ENCODE measurements at regions of chr21 and their contacts with region 1.

Region 1: GRCh38 chr21:36419996-36420395 is 34.8 kb downstream of the CHAF1B start:
- DNase-seq: peak; percentile 36
- H3K4me3 ChIP-seq: no peak overlapping the region
- H3K27me3 ChIP-seq: no peaks in the 10 kb centered on the region
- CTCF ChIP-seq: peak; percentile 84

Region 2: DNA sequence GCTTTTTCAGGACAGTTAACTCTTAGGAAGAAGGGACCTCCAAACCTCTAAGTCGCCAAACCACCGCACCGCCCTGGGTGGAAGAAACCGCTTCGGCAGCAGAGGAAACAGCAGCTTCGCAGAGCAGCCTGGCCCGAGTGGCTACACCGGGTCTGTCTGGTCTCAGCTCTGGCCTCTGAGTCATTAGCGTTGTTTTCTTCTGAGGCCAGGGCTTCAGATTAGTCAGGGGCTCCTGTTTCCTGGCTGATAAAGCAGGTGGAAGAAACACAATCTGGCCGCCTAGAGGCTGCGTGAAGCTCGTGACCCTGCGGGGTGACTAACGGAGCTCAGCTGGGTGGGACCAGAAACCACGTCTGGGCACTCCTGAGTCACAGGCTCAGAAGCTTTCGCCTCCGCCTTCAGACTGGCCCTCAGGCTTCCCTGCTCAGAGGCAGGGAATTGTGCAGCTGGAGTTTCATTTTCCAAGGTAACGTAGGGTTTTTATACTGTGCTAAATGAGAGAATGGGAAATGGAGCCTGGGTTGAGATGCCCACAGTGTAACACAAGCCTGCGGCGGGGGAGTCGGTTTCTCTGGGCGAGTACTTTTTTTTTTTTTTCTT is 10.1 kb after region 1 on chr21:
- CTCF ChIA-PET with region 1: interaction called, 20 read pairs
- POLR2A ChIA-PET with region 1: no interaction called
- DNase-seq: peak; percentile 95
- H3K4me3 ChIP-seq: peak overlapping the region; percentile 10; the same call in 1 of the 2 replicates
- H3K27me3 ChIP-seq: no peaks in the 10 kb centered on the region
- CTCF ChIP-seq: 0 out of 2 replicates have a peak, but pooled peaks have one; percentile 18

Region 3: DNA sequence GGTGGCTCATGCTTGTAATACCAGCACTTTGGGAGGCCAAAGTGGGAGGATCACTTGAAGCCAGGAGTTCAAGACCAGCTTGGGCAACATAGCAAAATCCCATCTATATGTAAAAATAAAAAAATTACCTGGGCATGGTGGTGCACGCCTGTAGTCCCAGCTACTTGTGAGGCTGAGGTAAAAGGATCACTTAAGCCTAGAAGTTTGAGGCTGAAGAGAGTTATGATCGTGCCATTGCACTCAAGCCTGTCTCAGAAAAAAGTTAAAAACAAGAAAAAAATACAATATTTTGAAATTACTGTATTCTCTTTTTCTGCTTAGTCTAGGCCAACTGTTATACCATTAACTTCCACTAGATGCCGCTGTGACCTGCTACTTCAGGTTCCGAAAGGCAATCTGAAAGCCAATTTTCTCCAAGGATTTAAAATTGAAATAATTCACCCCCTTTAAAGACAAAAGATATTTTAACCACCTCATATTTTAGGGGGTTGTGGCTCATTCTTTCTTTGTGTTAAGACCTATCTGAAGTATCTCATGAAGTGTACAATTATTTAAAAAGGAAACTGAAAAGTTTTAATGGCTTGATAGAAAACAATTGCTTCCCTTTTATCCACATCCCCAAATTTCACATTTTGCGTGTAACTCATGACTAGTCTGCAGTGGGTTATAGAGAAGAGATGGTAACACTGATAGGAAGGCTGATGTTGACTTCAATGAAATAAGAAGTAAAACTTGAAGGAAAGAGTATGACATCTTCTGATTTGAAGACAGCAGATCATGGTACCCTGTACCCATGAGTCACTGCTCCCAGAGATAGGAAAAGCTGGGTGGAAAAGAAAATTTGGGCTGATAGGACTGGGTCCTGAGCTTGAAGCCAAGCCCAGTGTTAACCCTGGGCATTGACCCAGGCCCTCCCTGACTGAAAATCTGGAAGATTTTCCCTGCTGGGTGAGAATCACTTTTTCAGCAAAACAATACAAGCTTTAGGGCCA is 84.4 kb after region 1 on chr21:
- CTCF ChIA-PET with region 1: interaction called, 12 read pairs
- POLR2A ChIA-PET with region 1: no interaction called
- DNase-seq: no peak
- H3K4me3 ChIP-seq: no peak overlapping the region
- H3K27me3 ChIP-seq: peaks cover 10% of the 10 kb centered on the region
- CTCF ChIP-seq: peak; percentile 78

Region 4: DNA sequence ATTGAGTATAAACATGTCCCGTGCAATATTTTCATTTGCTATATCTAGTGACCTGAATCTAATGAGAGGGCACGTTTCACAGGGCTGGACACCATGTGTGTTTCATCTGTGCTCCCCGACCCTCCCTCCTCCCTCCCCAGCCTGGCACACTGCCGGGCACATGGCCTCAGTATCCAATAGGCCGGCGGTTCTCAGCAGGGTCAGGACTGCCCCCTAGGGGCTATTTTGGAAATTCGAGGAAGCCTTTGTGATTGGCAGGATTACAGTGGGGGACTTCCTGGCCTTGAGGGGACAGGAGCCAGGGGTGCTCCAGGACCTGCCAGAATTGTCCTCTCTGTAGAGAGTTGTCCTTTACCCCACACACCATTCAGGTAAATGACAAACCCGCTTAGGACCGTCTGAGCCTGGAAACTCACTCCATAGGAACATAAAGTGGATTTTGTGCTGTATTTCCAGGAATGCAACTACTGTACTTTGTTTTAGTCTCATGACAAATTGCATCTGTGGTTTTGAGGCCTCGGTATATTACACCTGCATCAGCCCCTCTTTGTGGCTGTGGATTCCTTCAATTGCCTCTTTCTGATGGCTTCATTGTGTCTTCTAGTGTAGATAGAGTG is 169.5 kb after region 1 on chr21:
- CTCF ChIA-PET with region 1: interaction called, 11 read pairs
- POLR2A ChIA-PET with region 1: no interaction called
- DNase-seq: peak; percentile 1
- H3K4me3 ChIP-seq: no peak overlapping the region
- H3K27me3 ChIP-seq: peaks cover 2% of the 10 kb centered on the region
- CTCF ChIP-seq: peak; percentile 75

Region 5: DNA sequence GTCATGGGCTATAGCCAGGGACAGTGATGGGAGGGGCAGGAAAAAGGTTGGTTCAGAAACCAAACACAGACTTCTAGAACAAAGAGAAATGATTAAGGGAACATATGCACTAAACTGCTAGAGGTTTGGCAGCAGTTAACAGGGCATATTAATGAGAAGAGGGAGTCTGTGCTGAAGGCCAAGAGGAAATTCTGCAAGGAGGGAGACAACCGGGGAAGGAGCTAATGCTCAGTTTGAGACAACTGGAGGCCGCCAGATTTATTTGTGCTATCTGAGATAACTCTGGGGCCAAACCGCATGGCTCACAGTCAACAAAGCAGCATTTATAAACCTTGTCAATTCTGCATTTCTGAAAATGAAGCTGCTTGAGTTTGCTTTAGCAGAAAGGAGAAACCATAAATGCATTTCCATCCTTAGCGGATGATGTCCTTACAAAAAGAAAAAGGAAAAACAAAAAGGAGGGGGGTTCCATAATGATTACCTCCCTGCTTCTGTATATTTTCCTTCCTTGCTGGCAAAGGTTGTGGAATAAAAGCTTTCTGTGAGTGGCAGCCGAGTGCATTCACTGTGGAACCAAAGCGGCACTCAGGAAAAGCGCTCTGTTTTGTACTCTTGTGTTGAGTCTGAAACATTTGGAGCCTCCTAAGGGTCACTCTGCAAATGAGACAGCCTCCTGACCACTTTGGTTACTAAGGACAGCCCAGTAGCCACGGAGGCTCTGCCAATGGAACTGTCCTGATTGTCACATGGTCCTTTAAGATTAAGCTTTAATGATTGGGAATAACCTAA is 349.2 kb after region 1 on chr21:
- CTCF ChIA-PET with region 1: no interaction called
- POLR2A ChIA-PET with region 1: no interaction called
- DNase-seq: no peak
- H3K4me3 ChIP-seq: no peak overlapping the region
- H3K27me3 ChIP-seq: no peaks in the 10 kb centered on the region
- CTCF ChIP-seq: no peak